ENCODE measurements at regions of chr2 and their contacts with region 1.

Region 1: GRCh38 chr2:175726223-175726622 is 275.8 kb downstream of the LNPK start:
- DNase-seq: no peak
- ATAC-seq: no peak
- H3K4me3 ChIP-seq: no peak overlapping the region
- H3K27ac ChIP-seq: no peak overlapping the region
- H3K4me1 ChIP-seq: no peaks in the 10 kb centered on the region
- H3K27me3 ChIP-seq: no peaks in the 10 kb centered on the region
- CTCF ChIP-seq: no peak
- POLR2A ChIP-seq: no peak
- RAD21 ChIP-seq: no peak

Region 2: DNA sequence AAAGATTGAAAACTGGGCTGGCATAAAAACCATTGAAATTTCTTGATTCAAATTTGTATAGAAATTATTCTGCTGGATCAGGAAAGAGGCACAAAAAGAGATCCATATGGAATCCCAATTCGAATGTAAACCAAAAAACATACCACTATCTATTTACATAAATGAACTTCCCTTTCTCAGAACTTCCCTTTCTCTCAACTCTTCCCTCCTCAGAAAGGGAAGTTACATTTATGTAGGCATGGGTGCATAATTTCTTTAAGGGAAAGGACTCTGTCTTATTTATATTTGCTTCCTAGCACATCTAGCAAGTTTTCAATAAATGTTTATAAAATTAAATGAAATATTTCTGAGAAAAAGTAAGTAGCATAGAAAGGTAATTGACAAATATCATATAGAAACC is 146.6 kb before region 1 on chr2:
- CTCF ChIA-PET with region 1: no interaction called
- POLR2A ChIA-PET with region 1: no interaction called
- RAD21 ChIA-PET with region 1: no interaction called
- intact Hi-C with region 1: no loop called
- DNase-seq: no peak
- ATAC-seq: no peak
- H3K4me3 ChIP-seq: no peak overlapping the region
- H3K27ac ChIP-seq: no peak overlapping the region
- H3K4me1 ChIP-seq: no peaks in the 10 kb centered on the region
- H3K27me3 ChIP-seq: no peaks in the 10 kb centered on the region
- CTCF ChIP-seq: no peak
- POLR2A ChIP-seq: no peak
- RAD21 ChIP-seq: no peak

Region 3: GRCh38 chr2:175662335-175662734 is 63.9 kb before region 1 on chr2:
- CTCF ChIA-PET with region 1: no interaction called
- POLR2A ChIA-PET with region 1: no interaction called
- RAD21 ChIA-PET with region 1: no interaction called
- intact Hi-C with region 1: loop called (anchors 2 kb)
- DNase-seq: no peak
- ATAC-seq: no peak
- H3K4me3 ChIP-seq: no peak overlapping the region
- H3K27ac ChIP-seq: no peak overlapping the region
- H3K4me1 ChIP-seq: no peaks in the 10 kb centered on the region
- H3K27me3 ChIP-seq: peaks cover 8% of the 10 kb centered on the region; the same call in 1 of the 2 replicates
- CTCF ChIP-seq: no peak
- POLR2A ChIP-seq: no peak
- RAD21 ChIP-seq: no peak